Activated naive CD4-positive, alpha-beta T cell treated with anti-CD3 and anti-CD28 coated beads, Interleukin-2, amount 10 ng/mL, durations not matched to agents 7 days and 5 days (primary cell): ENCODE measurements at regions of chr6 and their contacts with region 1.

Region 1: DNA sequence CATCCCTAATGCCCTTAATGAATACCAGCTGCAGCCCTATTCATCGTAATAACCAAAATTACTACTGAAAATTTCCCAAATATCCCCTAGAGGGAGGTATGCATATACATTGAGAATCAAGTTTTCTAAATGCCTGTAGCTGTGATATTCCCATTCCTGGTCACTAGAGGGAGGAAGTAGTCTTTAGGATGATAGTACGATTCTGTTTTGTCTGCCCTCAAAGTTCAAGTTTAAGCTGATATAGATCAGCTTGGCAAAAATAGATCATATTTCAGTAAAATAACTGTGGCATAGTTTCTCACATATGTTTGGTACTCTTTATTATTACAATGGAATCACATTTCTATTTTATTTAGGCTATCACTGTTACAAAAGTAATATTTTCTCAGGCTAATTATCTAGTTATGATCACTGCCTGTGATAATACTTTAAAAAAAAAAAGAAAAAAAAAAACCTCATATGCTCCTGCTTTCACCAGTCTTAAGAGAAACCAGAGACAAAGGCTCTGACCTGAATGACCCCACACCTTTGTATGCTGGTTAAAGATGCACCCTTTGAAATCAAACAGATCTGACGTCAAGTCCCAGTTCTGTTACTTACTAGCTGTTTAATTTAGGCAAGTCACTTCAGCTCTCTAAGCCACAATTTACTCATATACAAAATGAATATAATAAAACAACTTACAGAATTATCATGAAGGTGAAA is 11.0 kb downstream of the TSPYL1 start:
- DNase-seq: no peak
- H3K4me3 Mint-ChIP-seq: no peak overlapping the region
- H3K27ac Mint-ChIP-seq: no peak overlapping the region
- H3K4me1 Mint-ChIP-seq: peaks cover 4% of the 10 kb centered on the region
- H3K27me3 Mint-ChIP-seq: no peaks in the 10 kb centered on the region

Region 2: GRCh38 chr6:115618256-115618655 is 650.5 kb before region 1 on chr6:
- CTCF ChIA-PET with region 1: no interaction called
- DNase-seq: no peak
- H3K4me3 Mint-ChIP-seq: no peak overlapping the region
- H3K27ac Mint-ChIP-seq: no peak overlapping the region
- H3K4me1 Mint-ChIP-seq: no peaks in the 10 kb centered on the region
- H3K27me3 Mint-ChIP-seq: no peaks in the 10 kb centered on the region

Region 3: DNA sequence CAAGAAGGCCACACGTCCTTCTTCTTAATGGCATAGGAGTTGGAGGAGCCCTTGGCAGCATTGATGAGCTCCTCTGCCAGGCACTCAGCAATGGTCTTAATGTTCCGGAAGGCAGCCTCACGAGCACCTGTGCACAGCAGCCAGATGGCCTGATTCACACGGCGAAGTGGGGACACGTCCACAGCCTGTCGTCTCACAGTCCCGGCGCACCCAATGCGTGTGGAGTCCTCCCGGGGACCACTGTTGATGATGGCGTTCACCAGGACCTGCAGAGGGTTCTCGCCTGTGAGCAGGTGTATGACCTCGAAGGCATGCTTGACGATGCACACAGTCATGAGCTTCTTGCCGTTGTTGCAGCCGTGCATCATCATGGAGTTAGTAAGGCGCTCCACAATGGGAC is 10.2 kb before region 1 on chr6:
- CTCF ChIA-PET with region 1: interaction called, 12 read pairs
- DNase-seq: no peak
- H3K4me3 Mint-ChIP-seq: no peak overlapping the region
- H3K27ac Mint-ChIP-seq: no peak overlapping the region
- H3K4me1 Mint-ChIP-seq: no peaks in the 10 kb centered on the region
- H3K27me3 Mint-ChIP-seq: no peaks in the 10 kb centered on the region

Region 4: GRCh38 chr6:116279260-116280063 is 10.7 kb after region 1 on chr6 and contains the start of gene TSPYL1:
- CTCF ChIA-PET with region 1: interaction called, 26 read pairs
- DNase-seq: peak; percentile 97
- H3K4me3 Mint-ChIP-seq: peak within 1 kb of the TSS; percentile 95
- H3K27ac Mint-ChIP-seq: peak within 1 kb of the TSS; percentile 97
- H3K4me1 Mint-ChIP-seq: peaks cover 54% of the 10 kb centered on the region
- H3K27me3 Mint-ChIP-seq: peaks cover 7% of the 10 kb centered on the region

Region 5: DNA sequence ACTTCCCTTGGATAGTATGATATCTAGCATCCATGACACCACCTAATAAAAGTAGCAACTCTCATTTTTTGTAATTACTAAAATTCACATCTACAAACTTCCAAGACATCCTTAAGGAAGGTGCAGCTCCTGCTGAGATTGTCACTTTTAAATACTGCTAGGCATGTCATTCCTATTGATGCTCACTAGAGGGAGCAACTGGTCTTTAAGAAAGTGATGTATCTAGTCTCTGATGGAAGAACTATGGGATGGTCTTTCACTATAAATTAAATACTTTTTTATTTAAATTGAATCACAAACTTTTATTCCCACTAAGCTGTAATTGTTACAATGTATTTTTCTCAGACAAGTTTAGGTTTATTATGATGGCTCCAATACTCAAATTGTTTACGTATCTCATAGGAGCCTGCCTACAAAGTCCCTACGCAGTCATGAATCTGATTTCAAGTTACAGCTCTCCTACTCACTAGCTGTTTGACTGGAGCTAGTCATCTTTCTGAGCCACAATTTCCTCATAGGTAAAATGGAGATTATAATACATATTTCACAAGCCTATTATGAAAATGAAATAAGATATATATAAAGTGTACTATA is 19.0 kb after region 1 on chr6:
- CTCF ChIA-PET with region 1: interaction called, 10 read pairs
- DNase-seq: no peak
- H3K4me3 Mint-ChIP-seq: no peak overlapping the region
- H3K27ac Mint-ChIP-seq: no peak overlapping the region
- H3K4me1 Mint-ChIP-seq: no peaks in the 10 kb centered on the region
- H3K27me3 Mint-ChIP-seq: no peaks in the 10 kb centered on the region

Region 6: GRCh38 chr6:116405138-116405537 is 136.4 kb after region 1 on chr6:
- CTCF ChIA-PET with region 1: no interaction called
- DNase-seq: no peak
- H3K4me3 Mint-ChIP-seq: no peak overlapping the region
- H3K27ac Mint-ChIP-seq: no peak overlapping the region
- H3K4me1 Mint-ChIP-seq: no peaks in the 10 kb centered on the region
- H3K27me3 Mint-ChIP-seq: peaks cover 15% of the 10 kb centered on the region

Region 7: DNA sequence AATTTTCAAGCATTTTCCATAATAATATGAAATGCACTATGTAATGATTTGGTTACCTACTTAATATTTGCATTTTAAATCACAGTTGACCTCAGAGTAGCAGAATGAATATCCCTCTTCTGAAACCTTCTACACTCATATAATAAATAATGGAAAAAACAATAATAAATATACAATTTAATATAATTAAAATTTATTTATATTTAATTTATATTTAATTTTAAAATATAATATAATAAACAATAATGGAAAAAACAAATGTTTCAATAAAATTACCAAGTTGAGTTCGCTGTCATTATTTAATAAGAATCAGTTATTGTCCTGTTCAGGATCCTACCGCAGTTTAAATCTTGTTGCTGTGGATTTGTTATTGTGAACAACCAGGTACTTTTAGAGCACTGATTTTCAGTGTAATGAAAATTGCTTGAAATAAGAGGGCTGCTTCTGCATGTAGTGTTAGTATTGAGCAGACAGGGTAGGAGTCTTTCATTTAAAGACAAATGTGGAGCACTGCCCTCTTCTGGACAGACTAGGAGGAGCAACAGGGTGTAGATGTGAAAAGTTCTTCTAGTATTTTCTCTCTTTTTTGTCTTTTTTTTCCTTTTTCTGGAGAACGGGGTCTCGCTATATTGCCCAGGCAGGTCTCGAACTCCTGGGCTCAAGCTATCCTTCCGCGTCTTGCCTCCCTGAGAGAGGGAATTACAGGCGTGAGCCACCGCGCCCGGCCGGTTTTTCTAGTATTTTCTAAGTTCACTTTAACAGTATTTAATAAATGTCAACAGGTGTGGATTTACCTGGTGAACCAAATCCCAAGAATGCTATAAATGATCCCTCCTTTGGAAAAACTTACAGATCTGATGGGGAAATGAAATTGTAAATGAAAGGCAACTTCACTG is 263.2 kb after region 1 on chr6:
- CTCF ChIA-PET with region 1: interaction called, 15 read pairs
- DNase-seq: peak; percentile 76
- H3K4me3 Mint-ChIP-seq: no peak overlapping the region
- H3K27ac Mint-ChIP-seq: no peak overlapping the region
- H3K4me1 Mint-ChIP-seq: no peaks in the 10 kb centered on the region
- H3K27me3 Mint-ChIP-seq: peaks cover 28% of the 10 kb centered on the region

Region 8: DNA sequence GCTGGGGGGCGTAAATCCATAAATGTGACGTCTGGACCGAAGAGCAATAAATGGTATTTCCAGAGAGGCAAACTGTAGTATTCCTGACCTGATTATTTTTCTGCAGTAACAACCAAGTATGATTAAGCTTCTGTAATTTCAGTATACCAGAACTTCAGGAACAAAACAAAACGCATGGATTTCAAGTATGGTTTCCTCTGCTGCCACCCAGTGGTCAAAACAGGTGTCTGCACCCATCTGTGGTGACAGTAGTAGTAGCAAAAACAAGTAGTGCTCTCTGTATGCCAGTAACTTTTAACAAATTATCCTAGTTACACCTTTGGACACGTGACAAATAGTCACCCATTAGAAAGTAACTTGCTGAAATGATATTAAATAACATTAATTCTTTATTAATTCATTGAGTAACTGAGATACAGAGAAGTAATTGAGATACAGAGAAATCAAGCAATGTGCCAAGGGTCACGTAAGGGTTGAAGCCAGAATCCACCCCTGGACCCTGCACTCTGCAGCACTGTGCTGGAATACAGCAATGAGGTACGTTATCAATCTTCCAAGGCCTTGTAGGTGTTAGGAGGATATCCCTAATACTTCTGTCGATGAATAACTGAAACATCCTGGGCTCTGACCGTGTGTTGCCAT is 292.8 kb after region 1 on chr6:
- CTCF ChIA-PET with region 1: interaction called, 13 read pairs
- DNase-seq: peak; percentile 81
- H3K4me3 Mint-ChIP-seq: no peak overlapping the region
- H3K27ac Mint-ChIP-seq: no peak overlapping the region
- H3K4me1 Mint-ChIP-seq: no peaks in the 10 kb centered on the region
- H3K27me3 Mint-ChIP-seq: peaks cover 28% of the 10 kb centered on the region